Lower leg skin (tissue), 4 donors: ENCODE measurements at regions of chr2 and their contacts with region 1.

Region 1: DNA sequence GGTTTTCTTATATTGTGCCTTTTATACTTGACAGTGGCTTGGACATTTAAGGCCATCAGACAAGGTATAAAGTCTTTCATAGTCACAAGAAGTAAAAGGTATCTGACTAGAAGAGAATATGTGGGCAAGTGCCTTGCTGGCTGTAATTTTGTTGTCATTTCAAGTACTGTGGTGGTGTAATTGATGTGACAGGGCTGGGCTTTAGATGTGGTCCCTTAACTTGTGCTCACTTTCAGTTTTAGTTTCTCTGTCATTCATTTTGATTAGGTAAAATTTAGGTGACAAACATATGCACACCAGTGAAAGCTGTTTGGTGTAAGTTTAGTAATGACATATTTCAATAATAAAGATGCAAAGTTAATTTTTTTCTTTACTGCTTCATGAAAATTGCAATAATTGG is 31.2 kb upstream of the TBR1 start:
- DNase-seq: no peak
- H3K4me3 ChIP-seq: no peak overlapping the region
- CTCF ChIP-seq: no peak
- POLR2A ChIP-seq: no peak

Region 2: DNA sequence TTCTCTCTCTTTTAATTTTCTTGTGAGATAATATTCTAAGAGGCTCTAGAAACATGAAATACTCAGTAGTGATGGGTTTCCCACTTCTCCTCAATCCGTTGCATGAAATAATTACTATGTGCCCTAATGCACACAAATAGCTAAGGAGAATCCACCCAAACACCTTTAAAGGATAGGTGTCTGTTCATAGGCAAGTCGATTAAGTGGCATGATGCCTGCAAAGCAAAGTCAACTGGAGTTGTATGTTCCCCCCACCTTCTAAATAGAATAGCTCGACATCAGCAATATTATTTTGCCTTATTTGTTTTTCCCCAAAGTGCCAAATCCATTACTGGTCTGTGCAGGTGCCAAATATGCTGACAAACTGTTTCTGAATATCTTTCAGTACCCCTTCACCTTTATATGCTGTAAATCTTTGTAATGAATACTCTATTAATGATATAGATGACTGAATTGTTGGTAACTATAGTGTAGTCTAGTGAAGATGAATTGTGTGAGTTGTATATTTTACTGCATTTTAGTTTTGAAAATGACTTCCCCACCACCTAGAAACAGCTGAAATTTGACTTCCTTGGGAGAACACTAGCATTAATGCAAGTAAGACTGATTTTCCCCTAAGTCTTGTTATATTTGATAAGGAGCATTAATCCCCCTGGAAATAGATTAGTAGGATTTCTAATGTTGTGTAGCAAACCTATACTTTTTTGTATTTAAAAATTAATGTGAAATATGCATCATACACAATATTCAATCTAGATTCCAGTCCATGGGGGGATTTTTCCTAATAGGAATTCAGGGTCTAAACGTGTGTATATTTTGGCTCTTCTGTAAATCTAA is 40.2 kb after region 1 on chr2:
- intact Hi-C with region 1: loop called (anchors 1 kb)
- DNase-seq: no peak
- H3K4me3 ChIP-seq: no peak overlapping the region
- CTCF ChIP-seq: no peak
- POLR2A ChIP-seq: no peak

Region 3: DNA sequence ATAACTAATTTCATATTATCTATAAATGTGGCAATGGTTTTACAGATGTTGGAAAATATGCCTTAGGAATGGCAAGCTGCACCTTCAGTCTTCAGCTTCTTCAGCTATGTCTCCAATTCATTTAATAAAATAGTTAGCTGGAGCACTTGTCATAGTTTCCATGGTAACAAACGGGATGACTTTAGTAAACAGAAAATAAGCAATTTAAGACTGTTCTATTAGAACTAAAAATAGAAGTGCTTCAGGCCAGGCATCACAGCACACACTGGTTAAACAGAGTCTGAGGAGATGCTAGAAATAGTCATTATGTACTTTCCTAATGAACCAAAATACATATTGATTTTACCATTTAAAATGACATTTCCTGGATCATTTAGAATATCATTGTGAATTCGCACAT is 1154.1 kb after region 1 on chr2:
- intact Hi-C with region 1: no loop called
- DNase-seq: no peak
- H3K4me3 ChIP-seq: no peak overlapping the region
- CTCF ChIP-seq: no peak
- POLR2A ChIP-seq: no peak